GM18951 (cell line): ENCODE measurements at regions of chr1 and their contacts with region 1.

Region 1: DNA sequence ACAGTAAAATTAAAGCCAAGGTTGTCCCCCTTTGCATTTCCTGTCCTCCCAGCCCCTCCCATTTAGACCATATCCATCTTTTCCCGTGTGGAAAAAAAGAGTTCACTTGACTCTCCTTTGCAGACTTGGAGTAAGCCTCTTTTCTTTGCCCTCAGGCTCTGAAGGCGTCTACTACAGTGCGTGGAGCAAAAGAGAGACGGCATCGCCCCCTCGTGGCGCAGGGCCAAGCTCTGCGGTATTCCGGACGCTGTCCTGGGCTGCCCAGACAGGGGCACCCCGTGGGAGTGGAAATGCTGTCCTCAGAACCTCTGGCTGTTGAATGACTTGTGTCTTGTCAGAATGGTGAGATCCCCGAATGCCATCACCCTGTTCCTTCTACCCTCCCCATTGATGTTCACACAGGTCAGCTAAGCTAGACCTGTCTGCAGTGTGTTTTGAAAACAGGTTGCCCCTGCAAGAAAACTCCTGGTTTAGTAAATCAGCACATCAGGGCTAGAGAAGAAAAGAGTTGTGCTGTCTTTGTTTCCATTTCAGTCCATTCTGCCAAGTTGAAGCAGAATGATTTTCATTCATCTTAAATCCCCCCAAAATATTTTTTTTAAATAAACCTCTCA is 12.3 kb upstream of the GJA8 start:
- POLR2A ChIP-seq: no peak

Region 2: DNA sequence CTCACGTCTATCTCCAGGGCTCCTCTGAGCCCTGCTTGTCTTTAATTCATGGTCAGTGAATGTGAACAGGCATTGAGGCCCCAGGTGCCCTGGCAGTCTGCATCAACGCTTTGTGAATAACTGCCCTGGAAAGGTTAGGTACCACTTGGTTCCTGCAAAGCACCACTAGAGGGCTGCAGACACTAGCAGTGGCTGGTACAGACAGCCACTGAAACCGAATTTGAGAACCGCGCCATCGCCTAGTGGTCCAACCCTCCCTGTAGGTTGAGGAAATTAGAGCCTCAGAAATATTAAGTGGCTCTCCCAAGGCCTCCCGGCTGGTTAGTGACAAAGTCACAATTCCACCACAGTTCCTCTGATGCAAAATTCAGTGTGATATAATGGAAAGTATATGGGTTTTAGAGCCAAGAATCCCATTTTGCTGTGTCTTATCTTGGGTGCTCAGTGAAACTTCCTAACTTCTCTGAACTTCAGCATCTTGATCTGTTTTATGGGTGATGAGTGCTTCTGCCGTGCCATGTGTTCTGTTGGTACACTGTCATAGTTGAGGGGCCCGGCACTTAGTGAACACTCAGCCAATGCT is 395.2 kb before region 1 on chr1:
- in situ Hi-C with region 1: loop called (anchors 25 kb)
- POLR2A ChIP-seq: no peak